IMR-90 (cell line): ENCODE measurements at regions of chr3 and their contacts with region 1.

Region 1: DNA sequence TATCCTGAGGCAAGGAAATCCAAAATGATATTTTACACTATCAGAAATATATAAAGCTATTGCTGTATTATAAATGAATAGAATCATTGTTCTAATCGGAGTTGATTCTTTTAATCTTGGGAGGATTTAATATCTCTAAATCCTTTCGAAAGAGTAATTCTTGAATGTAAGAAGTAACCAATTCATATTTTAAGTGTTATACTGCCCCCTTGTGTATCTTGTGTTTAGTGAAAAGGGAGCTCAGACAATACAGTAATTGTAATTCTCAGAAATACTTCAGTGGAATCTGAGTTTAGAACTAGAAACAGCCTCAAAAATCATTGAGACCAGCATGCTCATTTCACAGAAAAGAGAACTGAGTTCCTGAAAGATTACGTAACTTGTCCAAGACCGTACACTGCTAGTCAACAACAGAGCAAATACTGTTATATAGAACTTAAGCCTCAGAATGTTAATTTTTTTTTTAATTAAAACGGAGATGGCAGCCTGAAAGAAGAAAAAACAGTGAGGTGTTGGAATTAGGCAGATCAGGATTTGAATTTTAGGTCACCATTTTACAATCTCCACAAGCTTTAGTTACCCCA is 42.9 kb downstream of the PLCH1 start:
- DNase-seq: peak; percentile 58
- ATAC-seq: peak; percentile 64
- H3K4me3 ChIP-seq: no peak overlapping the region
- H3K27ac ChIP-seq: no peak overlapping the region
- H3K4me1 ChIP-seq: no peaks in the 10 kb centered on the region
- H3K27me3 ChIP-seq: no peaks in the 10 kb centered on the region
- CTCF ChIP-seq: peak; percentile 70
- POLR2A ChIP-seq: no peak
- RAD21 ChIP-seq: peak; percentile 66

Region 2: DNA sequence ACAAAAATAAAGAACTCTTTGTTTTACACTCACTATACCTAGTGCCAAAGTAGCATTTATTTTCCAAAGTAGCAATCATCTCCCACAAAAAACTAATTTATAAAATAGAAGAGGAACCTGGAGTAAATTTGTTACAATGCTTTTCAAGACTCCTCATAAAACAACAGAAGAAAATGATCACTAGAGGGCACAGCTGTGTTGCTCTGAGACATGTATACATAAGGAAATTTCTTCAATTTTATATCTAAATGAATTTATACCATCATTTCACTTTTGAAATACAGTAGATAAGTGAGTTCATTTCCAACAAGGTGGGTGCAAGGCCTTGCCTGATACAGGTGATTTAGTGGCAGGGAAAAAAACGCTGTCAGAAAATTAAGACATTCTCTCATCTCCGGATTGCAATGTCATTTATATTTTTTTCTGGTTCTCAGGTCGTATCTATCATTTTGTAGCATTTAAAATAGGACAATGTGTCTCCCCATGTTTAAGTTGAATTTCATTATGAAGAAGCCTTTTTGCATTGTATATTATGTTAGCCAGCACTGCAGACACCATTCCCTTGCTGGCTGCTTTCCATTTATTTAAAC is 1606.0 kb before region 1 on chr3:
- CTCF ChIA-PET with region 1: no interaction called
- POLR2A ChIA-PET with region 1: no interaction called
- dilution Hi-C with region 1: no loop called
- in situ Hi-C with region 1: no loop called
- intact Hi-C with region 1: loop called (anchors 10 kb)
- DNase-seq: peak; percentile 55
- ATAC-seq: peak; percentile 72
- H3K4me3 ChIP-seq: no peak overlapping the region
- H3K27ac ChIP-seq: no peak overlapping the region
- H3K4me1 ChIP-seq: no peaks in the 10 kb centered on the region
- H3K27me3 ChIP-seq: 0 out of 2 replicates have a peak, but pooled peaks cover 2% of the 10 kb centered on the region
- CTCF ChIP-seq: peak; percentile 67
- POLR2A ChIP-seq: no peak
- RAD21 ChIP-seq: peak; percentile 70

Region 3: DNA sequence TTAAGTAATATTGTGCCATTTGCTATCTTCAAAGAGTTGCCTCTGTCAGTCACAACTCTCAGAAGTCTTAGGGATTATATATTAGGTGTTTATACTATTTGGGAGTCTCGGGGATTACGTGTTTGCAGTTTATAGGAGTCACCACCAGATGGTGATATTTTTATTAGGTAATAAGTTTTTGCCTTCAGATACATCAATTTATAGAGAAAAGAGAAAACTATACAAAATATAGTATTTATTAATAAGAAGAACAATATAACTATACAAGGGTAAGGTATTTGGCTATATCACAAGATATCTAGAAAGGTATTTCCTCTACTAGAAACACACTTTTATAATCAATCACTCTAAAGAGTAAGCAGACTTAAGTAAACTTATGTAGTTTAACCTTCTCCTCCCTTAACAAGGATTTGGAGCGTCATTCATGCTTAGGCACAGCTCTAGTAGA is 1367.0 kb before region 1 on chr3:
- CTCF ChIA-PET with region 1: no interaction called
- POLR2A ChIA-PET with region 1: no interaction called
- dilution Hi-C with region 1: no loop called
- in situ Hi-C with region 1: no loop called
- intact Hi-C with region 1: loop called (anchors 1 kb)
- DNase-seq: peak; percentile 53
- ATAC-seq: peak; percentile 69; the same call in 1 of the 2 replicates
- H3K4me3 ChIP-seq: no peak overlapping the region
- H3K27ac ChIP-seq: no peak overlapping the region
- H3K4me1 ChIP-seq: no peaks in the 10 kb centered on the region
- H3K27me3 ChIP-seq: peaks cover 2% of the 10 kb centered on the region; the same call in 1 of the 2 replicates
- CTCF ChIP-seq: peak; percentile 62
- POLR2A ChIP-seq: no peak
- RAD21 ChIP-seq: peak; percentile 37

Region 4: DNA sequence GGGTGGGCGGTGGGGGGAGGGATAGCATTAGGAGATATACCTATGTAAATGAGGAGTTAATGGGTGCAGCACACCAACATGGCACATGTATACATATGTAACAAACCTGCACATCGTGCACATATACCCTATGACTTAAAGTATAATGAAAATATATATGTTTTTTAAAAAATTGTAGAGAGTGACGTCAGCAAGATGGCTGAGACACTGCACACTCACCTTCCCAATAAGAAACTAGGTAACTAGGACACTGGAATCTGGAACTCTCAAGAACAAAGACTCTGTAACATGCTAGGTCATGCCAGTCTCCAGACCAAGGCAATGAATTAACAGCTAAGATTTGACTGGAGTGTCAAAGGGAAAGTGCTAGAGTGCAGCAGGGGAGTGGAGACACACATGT is 715.2 kb before region 1 on chr3:
- CTCF ChIA-PET with region 1: no interaction called
- POLR2A ChIA-PET with region 1: no interaction called
- dilution Hi-C with region 1: no loop called
- in situ Hi-C with region 1: no loop called
- intact Hi-C with region 1: no loop called
- DNase-seq: no peak
- ATAC-seq: no peak
- H3K4me3 ChIP-seq: no peak overlapping the region
- H3K27ac ChIP-seq: no peak overlapping the region
- H3K4me1 ChIP-seq: no peaks in the 10 kb centered on the region
- H3K27me3 ChIP-seq: no peaks in the 10 kb centered on the region
- CTCF ChIP-seq: no peak
- POLR2A ChIP-seq: no peak
- RAD21 ChIP-seq: no peak

Region 5: DNA sequence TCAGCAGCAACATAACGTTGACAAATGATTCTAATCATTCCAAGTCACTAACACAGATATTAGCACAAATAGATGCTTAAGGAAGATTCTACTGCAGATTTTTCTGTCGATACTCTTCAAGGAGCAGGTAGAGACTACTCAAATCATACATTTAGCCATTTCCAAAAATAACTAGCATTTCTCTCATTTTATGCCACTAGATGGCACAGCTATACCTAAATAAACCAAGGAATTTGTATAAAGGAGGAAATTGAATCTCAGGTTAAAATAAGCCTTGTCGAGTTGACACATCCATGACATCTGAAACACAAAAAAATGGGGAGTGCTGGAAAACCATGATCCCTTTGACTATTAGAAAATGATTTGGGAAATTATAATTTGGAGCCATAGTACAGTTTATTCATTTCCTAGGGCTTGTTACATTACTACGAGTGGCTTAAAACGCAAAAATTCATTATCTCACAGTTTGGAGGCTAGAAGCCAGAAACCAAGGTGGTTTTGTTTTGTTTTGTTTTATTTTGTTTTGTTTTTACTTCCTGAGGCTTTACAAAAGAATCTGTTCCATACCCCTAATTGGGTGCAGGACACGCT is 349.0 kb before region 1 on chr3:
- CTCF ChIA-PET with region 1: interaction called, 6 read pairs
- POLR2A ChIA-PET with region 1: no interaction called
- dilution Hi-C with region 1: no loop called
- in situ Hi-C with region 1: loop called (anchors 10 kb)
- intact Hi-C with region 1: loop called (anchors 1 kb)
- DNase-seq: peak; percentile 21
- ATAC-seq: peak; percentile 63; the same call in 1 of the 2 replicates
- H3K4me3 ChIP-seq: no peak overlapping the region
- H3K27ac ChIP-seq: no peak overlapping the region
- H3K4me1 ChIP-seq: no peaks in the 10 kb centered on the region
- H3K27me3 ChIP-seq: peaks cover 4% of the 10 kb centered on the region; the same call in 1 of the 2 replicates
- CTCF ChIP-seq: peak; percentile 41
- POLR2A ChIP-seq: no peak
- RAD21 ChIP-seq: peak; percentile 45

Region 6: GRCh38 chr3:155382396-155383042 is 319.5 kb before region 1 on chr3:
- CTCF ChIA-PET with region 1: interaction called, 26 read pairs
- POLR2A ChIA-PET with region 1: no interaction called
- dilution Hi-C with region 1: no loop called
- in situ Hi-C with region 1: loop called (anchors 10 kb)
- intact Hi-C with region 1: loop called (anchors 1 kb)
- DNase-seq: peak; percentile 42
- ATAC-seq: peak; percentile 85
- H3K4me3 ChIP-seq: no peak overlapping the region
- H3K27ac ChIP-seq: no peak overlapping the region
- H3K4me1 ChIP-seq: no peaks in the 10 kb centered on the region
- H3K27me3 ChIP-seq: no peaks in the 10 kb centered on the region; the same call in 1 of the 2 replicates
- CTCF ChIP-seq: peak; percentile 68
- POLR2A ChIP-seq: no peak
- RAD21 ChIP-seq: peak; percentile 78

Region 7: DNA sequence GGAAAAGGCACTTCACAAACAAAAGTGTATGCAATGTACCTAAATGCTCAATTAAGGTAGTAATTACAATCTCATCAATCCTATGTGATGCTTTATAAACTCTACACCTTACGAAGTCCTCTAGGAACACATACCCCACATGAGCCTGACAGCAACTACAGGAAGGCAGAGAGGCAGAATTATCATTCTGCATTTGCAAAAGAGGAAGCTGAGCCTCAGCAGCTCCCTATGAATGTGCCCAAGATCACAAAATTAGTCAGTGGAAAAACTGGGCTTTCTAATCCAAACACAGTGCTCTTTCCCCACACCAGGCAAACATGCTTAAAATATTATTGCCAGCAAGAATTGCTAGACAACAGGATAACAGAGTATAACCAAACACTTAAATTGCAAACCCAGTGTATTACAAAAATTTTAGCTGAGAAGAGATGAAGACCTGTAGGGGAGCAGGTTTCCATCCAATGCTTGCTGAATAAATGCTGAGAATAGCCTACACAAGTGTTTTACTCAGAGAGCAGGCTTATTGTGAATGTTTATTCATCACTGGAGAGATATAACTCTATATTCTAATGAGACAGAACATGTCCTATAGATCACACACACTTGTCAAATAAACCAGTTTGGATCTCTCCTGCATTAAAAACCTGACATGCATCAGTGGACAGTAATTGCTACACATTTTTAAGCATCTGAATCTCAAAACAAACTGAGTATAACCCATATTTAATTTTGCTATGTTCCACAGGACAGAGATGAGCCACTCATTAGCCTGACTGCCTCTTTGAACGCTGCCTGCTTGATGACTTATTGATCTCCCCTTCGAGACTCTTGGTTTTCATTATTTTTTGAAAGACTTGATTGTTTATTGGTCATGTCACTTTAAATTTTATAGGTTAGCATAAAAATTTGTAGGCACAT is 19.3 kb before region 1 on chr3:
- CTCF ChIA-PET with region 1: no interaction called
- POLR2A ChIA-PET with region 1: no interaction called
- dilution Hi-C with region 1: no loop called
- in situ Hi-C with region 1: no loop called
- intact Hi-C with region 1: no loop called
- DNase-seq: no peak
- ATAC-seq: no peak
- H3K4me3 ChIP-seq: no peak overlapping the region
- H3K27ac ChIP-seq: no peak overlapping the region
- H3K4me1 ChIP-seq: no peaks in the 10 kb centered on the region
- H3K27me3 ChIP-seq: no peaks in the 10 kb centered on the region
- CTCF ChIP-seq: no peak
- POLR2A ChIP-seq: no peak
- RAD21 ChIP-seq: no peak

Region 8: DNA sequence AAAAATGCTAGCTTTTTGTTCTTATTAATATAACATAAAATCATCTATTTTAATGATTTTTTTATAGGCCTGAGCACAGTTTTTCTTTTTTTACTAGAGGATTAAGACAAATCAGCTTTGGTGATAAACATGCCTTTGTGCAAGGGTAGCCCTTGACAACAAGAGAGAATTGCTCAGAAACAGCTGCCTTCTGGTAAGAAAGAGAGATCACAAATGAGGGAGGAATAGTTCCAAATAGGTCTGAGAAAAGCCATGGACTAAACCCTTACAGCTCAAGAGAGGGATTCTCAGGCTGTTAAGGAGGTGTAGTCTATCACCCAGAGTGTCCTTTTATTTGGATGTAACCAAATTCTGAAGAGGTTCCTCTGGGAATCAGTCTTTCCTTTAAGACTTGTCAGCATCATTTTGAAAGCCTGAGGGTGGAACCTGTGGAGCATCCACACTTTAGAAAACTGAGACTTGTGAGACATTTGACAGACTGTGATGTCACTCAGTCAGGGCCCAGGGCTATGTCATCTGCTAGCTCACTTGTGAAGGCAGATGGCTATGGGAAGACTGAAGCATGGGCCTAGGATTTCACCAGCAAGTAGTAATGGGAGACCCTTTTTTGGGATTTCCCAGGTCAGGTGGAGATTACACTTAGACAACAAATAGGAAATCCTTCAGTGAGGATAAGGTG is 315.5 kb after region 1 on chr3:
- CTCF ChIA-PET with region 1: no interaction called
- POLR2A ChIA-PET with region 1: no interaction called
- dilution Hi-C with region 1: no loop called
- in situ Hi-C with region 1: no loop called
- intact Hi-C with region 1: no loop called
- DNase-seq: no peak
- ATAC-seq: no peak
- H3K4me3 ChIP-seq: no peak overlapping the region
- H3K27ac ChIP-seq: no peak overlapping the region
- H3K4me1 ChIP-seq: no peaks in the 10 kb centered on the region
- H3K27me3 ChIP-seq: no peaks in the 10 kb centered on the region
- CTCF ChIP-seq: no peak
- POLR2A ChIP-seq: no peak
- RAD21 ChIP-seq: no peak